HCT116 (cell line): ENCODE measurements at regions of chr17 and their contacts with region 1.

Region 1: DNA sequence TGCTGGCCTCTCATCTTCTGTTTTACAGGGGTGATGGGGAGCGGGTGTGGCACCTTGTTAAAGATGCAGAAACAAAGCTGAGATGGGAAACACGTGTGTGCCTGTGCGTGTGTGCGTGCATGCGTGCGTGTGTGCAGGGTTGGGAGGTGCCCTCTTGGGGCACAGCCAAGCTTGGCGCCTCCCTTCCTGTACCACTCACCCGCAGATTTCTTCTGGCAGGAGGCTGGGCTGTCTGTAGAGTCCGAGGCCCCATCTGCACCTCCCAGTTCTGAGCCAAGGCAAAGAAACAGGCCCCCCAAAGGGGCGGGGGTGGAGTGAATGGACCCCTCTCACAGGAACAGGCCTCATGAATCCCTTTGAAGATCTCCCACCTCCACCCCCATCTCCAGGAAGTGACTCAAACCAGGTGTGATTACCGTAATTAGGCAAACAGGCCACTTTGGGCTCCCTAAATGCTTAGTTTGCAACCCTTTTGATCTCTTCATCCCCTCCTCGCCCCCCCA is 20.9 kb downstream of the TNS4 start:
- DNase-seq: no peak
- ATAC-seq: peak; percentile 9; the same call in 1 of the 2 replicates
- H3K4me3 ChIP-seq: no peak overlapping the region
- H3K27ac ChIP-seq: peak overlapping the region; percentile 15; the same call in 1 of the 2 replicates
- H3K4me1 ChIP-seq: peaks cover 49 to 83% of the 10 kb centered on the region in 2 experiments
- H3K27me3 ChIP-seq: no peaks in the 10 kb centered on the region
- CTCF ChIP-seq: no peak
- POLR2A ChIP-seq: no peak
- RAD21 ChIP-seq: no peak

Region 2: GRCh38 chr17:40190197-40191021 is 290.1 kb before region 1 on chr17:
- CTCF ChIA-PET with region 1: no interaction called
- POLR2A ChIA-PET with region 1: no interaction called
- RAD21 ChIA-PET with region 1: no interaction called
- intact Hi-C with region 1: no loop called
- DNase-seq: no peak
- ATAC-seq: peak; percentile 62
- H3K4me3 ChIP-seq: no peak overlapping the region
- H3K27ac ChIP-seq: no peak overlapping the region; the same call in 1 of the 2 replicates
- H3K4me1 ChIP-seq: peaks cover 13 to 28% of the 10 kb centered on the region in 2 experiments
- H3K27me3 ChIP-seq: no peaks in the 10 kb centered on the region
- CTCF ChIP-seq: peak in 2 of 3 experiments; percentile 45 to 52; a peak in 2 of 6 replicates
- POLR2A ChIP-seq: no peak
- RAD21 ChIP-seq: no peak

Region 3: GRCh38 chr17:40399185-40399584 is 81.4 kb before region 1 on chr17:
- CTCF ChIA-PET with region 1: interaction called, 7 read pairs
- POLR2A ChIA-PET with region 1: no interaction called
- RAD21 ChIA-PET with region 1: no interaction called
- intact Hi-C with region 1: loop called (anchors 1 kb)
- DNase-seq: peak; percentile 32
- ATAC-seq: peak; percentile 86
- H3K4me3 ChIP-seq: no peak overlapping the region
- H3K27ac ChIP-seq: no peak overlapping the region
- H3K4me1 ChIP-seq: no peaks in the 10 kb centered on the region
- H3K27me3 ChIP-seq: no peaks in the 10 kb centered on the region
- CTCF ChIP-seq: peak; percentile 41 to 67 (median 42); a peak in 4 of 6 replicates
- POLR2A ChIP-seq: no peak
- RAD21 ChIP-seq: peak; percentile 49